ENCODE measurements at regions of chr6 and their contacts with region 1.

Region 1: DNA sequence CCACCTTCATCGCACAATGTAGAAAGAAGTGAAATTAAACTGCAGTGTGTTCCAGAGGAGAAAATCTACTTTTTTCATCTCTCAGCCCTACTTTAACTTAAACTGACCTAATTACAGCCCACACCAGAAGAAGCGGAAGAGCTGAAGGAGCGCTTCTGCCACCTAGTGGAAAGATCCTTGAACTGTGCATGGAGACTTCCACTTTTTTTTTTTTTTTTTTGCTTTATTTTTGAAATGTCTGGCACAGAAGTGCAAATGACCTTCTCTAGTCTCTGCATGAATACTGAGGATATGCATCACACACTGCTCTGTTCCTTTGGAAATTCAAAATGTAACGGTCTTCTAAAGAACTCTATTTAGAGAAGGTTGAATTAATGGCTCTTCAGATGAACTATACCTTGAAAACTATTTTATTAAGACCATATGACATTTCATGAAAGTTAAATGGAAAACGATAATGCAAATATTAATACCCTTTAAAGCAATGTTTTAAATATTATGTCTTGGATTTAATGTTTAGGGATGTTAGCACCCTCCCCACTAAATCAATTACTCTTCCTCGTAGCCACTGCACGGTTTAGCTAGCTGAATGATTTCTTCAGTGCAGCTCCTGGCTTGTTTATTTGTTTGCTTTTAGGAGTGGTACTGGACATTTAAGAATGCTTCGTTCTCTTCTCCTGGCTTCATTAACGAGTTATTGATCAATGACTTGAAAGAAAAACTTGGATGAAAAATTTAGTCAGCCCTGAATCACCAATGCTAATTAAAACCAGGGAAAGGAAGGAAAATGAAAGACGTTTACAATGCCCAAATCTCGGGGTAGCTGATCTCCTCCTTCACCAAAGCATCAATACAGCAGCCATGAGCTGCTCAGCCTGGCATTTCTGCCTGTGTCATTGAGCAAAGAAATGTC is 569.6 kb upstream of the GJE1 start:
- DNase-seq: peak; percentile 47 to 89 (median 54)
- ATAC-seq: peak; percentile 94
- H3K4me3 ChIP-seq: peak overlapping the region; percentile 36
- H3K4me3 Mint-ChIP-seq: peak overlapping the region; percentile 84
- H3K27ac ChIP-seq: no peak overlapping the region
- H3K27ac Mint-ChIP-seq: peak overlapping the region; percentile 43
- H3K4me1 ChIP-seq: peaks cover 9% of the 10 kb centered on the region
- H3K4me1 Mint-ChIP-seq: peaks cover 16% of the 10 kb centered on the region
- H3K27me3 ChIP-seq: no peaks in the 10 kb centered on the region
- H3K27me3 Mint-ChIP-seq: no peaks in the 10 kb centered on the region
- CTCF ChIP-seq: peak; percentile 99

Region 2: DNA sequence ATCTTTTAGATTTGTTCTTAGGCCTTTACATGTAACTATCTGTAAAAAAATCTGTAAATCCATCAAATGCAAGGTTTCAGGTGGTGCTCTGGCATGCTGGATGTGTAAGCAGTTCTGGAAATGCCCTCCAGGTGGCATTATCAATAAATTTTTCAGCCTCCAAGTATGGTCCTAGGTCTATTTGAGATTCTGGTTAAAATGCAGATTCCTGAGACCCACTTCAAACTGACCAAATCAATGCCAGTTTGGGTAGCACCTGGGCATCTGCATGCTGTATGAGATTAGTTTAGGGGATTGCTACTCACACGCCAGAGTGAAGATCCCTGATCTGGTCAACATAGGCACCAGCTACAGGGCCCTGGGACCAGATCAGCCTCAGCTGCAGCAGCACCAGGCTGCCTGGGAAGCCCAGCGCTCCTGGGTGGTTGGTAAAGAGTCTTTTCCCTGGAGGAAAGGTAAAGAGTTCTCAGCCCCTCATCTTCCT is 1681.3 kb before region 1 on chr6:
- CTCF ChIA-PET with region 1: no interaction called
- POLR2A ChIA-PET with region 1: no interaction called
- intact Hi-C with region 1: loop called in 1 of 2 experiments (anchors 5 kb)
- DNase-seq: peak in 4 of 14 experiments; percentile 8 to 38 (median 37)
- ATAC-seq: peak; percentile 57
- H3K4me3 ChIP-seq: no peak overlapping the region
- H3K4me3 Mint-ChIP-seq: no peak overlapping the region
- H3K27ac ChIP-seq: no peak overlapping the region
- H3K27ac Mint-ChIP-seq: no peak overlapping the region
- H3K4me1 ChIP-seq: no peaks in the 10 kb centered on the region
- H3K4me1 Mint-ChIP-seq: no peaks in the 10 kb centered on the region
- H3K27me3 ChIP-seq: peaks cover 0 to 3% of the 10 kb centered on the region in 2 experiments
- H3K27me3 Mint-ChIP-seq: peaks cover 7% of the 10 kb centered on the region
- CTCF ChIP-seq: peak; percentile 59

Region 3: GRCh38 chr6:141309295-141309694 is 253.8 kb before region 1 on chr6:
- CTCF ChIA-PET with region 1: interaction called, 3 read pairs
- POLR2A ChIA-PET with region 1: no interaction called
- intact Hi-C with region 1: loop called (anchors 5 kb)
- DNase-seq: peak in 3 of 14 experiments; percentile 7 to 37 (median 26)
- ATAC-seq: no peak
- H3K4me3 ChIP-seq: no peak overlapping the region
- H3K4me3 Mint-ChIP-seq: no peak overlapping the region
- H3K27ac ChIP-seq: no peak overlapping the region
- H3K27ac Mint-ChIP-seq: no peak overlapping the region
- H3K4me1 ChIP-seq: no peaks in the 10 kb centered on the region
- H3K4me1 Mint-ChIP-seq: no peaks in the 10 kb centered on the region
- H3K27me3 ChIP-seq: no peaks in the 10 kb centered on the region
- H3K27me3 Mint-ChIP-seq: no peaks in the 10 kb centered on the region
- CTCF ChIP-seq: no peak

Region 4: GRCh38 chr6:141403795-141404194 is 159.3 kb before region 1 on chr6:
- CTCF ChIA-PET with region 1: no interaction called
- POLR2A ChIA-PET with region 1: no interaction called
- intact Hi-C with region 1: loop called in 1 of 2 experiments (anchors 10 kb)
- DNase-seq: no peak
- ATAC-seq: no peak
- H3K4me3 ChIP-seq: no peak overlapping the region
- H3K4me3 Mint-ChIP-seq: no peak overlapping the region
- H3K27ac ChIP-seq: no peak overlapping the region
- H3K27ac Mint-ChIP-seq: no peak overlapping the region
- H3K4me1 ChIP-seq: peaks cover 7% of the 10 kb centered on the region
- H3K4me1 Mint-ChIP-seq: peaks cover 8% of the 10 kb centered on the region
- H3K27me3 ChIP-seq: no peaks in the 10 kb centered on the region
- H3K27me3 Mint-ChIP-seq: no peaks in the 10 kb centered on the region
- CTCF ChIP-seq: no peak

Measured in CD4-positive, alpha-beta T cell (primary cell).